ENCODE measurements at regions of chr11 and their contacts with region 1.

Region 1: DNA sequence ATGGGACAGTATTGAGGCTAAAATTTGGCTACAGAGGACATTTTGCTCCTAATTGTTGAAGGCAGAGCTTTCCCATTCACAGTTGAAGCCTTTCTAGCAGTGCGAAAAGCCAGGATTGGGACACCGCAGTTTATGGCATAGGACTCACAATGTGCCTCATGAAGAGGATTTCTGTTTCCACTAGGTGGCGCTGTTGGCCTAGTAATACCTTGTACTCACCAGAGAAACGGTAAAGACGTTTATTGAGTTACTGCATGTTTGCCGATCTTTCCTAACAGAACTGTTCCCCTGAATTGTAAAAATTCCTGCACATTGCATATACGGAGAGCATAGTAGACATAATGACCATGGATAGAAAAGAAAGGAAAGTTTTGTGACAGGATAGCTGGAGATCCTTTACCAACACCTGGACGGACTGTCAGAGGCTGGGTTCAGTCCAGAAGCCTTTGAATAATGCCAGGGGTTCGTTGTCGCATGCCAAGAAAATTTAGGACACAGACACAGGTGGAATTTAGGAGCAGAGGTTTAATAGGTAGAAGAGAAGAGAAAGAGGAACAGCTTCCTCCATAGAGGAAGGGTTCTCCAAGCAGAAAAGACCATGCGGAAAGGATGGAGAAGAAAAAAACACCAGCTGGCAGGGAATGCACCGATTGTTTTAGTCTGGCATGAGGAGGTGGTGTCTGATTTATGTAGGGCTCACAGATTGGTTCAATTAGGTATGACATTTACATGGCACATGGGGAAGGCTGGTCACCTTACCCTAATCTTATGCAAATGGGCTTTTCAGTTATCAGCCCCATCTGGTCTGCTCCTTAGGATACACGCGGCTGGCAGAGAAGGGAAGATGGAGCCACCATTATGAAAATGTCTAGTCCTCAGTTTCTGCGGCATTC is 10.8 kb upstream of the OR51D1 start:
- DNase-seq: peak; percentile 88
- H3K4me3 Mint-ChIP-seq: no peak overlapping the region
- H3K27ac Mint-ChIP-seq: no peak overlapping the region
- H3K4me1 Mint-ChIP-seq: no peaks in the 10 kb centered on the region
- H3K27me3 Mint-ChIP-seq: peaks cover 45% of the 10 kb centered on the region
- CTCF ChIP-seq: peak; percentile 73

Region 2: GRCh38 chr11:5004424-5005274 is 378.2 kb after region 1 on chr11:
- CTCF ChIA-PET with region 1: interaction called, 11 read pairs
- POLR2A ChIA-PET with region 1: no interaction called
- intact Hi-C with region 1: loop called (anchors 1 kb)
- DNase-seq: peak; percentile 71
- H3K4me3 Mint-ChIP-seq: no peak overlapping the region
- H3K27ac Mint-ChIP-seq: no peak overlapping the region
- H3K4me1 Mint-ChIP-seq: no peaks in the 10 kb centered on the region
- H3K27me3 Mint-ChIP-seq: peaks cover 42% of the 10 kb centered on the region
- CTCF ChIP-seq: peak; percentile 72

Measured in MCF 10A (cell line).